ENCODE measurements at regions of chrX and their contacts with region 1.

Region 1: DNA sequence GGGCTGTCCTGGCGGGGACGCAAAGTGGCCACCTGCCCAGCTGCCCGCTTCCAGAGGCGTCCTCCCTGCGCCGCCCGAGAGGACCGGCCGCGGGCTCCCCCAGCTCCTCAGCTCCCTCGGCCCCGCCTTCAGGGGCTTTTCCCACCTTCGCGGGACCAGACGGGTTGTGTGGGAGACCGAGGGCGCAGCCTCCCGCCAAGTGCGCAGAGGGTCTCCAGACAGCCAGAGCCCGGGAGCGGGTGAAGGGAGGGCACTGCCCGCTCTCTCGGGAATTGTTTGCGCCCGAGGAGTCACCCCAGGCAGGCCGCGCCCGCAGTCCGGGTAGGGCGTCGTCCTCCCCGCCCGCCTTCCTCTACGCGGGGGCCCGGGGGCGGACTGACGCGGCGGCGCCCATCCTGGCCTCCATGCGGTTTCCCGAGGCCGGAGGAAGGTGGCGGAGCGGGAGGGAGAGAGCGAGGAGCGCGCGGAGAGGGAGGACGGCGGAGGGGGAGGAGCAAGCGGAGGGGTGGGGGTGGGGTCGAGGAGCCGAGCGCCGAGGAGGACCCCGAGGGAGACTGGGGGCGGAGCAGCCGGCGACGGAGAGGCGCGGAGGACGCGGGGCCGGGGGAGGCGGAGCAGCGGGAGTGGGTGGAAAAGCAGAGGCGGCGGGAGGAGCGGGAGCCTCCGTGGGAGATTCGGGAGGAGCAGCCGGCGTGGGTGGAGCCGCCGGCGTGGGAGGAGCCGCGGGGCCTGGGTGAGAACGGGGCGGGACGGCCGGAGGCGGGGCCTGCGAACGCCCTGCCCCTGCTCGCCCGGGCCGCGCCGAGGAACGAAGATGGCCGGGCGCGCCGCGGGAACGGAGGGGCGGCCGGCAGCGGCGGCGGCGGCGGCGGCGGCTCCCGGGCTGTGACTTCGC is 47.6 kb downstream of the CLDN34 start:
- DNase-seq: peak; percentile 94

Region 2: DNA sequence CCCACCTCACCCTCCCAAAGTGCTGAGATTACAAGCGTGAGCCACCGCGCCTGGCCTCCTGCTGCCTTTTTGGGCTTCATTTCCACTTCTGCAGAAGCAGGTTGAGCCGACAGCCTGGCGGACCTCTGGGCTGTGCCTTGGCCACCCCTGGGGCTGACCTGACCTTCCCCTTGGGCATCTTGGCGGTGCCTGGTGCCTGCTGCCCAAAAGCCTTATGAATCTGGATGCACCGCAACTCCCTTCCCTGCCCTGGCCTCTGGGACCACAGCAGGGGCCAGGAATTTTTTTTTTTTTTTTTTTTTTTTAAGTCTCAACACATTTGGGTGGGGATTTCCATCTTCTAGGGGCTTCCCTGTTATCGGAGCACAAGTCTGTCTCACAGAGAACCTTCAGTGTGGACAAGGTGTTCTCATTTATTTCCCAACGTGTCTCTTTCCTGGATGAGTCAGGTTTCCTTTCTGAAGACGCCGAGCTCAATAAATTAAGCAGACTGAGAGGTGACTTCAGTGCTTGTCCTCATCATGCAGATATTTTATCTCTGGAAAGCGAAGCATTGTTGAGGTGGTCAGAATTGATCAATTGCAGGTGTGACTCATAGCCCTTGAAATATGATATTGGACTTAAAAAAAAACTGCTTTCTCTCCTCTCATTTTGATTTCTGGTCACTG is 148.8 kb before region 1 on chrX:
- intact Hi-C with region 1: no loop called
- DNase-seq: no peak

Region 3: DNA sequence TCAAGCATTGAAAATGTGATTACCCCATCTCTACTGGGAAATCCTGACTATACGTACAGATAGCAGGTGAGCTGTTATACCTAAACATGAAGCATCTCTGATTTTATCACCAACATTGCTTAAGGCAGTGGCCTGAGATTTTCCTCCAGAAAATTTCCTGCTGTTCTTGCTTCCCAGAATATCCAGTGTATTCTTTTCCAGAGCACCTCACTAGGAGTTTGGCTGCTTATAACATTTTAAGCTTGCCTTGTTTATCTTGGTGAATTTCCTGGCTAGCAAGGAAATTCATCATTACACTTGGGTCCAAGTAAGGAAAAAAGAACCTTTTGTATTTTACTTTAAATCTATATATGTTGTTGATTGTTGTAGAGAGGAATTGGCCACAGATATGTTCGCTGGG is 69.1 kb after region 1 on chrX:
- intact Hi-C with region 1: loop called (anchors 2 kb)
- DNase-seq: no peak

Region 4: GRCh38 chrX:10098270-10098713 is 83.6 kb after region 1 on chrX:
- intact Hi-C with region 1: no loop called
- DNase-seq: no peak